ENCODE measurements at regions of chr4 and their contacts with region 1.

Region 1: GRCh38 chr4:10018818-10019461 is 2.4 kb downstream of the SLC2A9 start:
- DNase-seq: peak; percentile 98
- ATAC-seq: peak; percentile 97

Region 2: DNA sequence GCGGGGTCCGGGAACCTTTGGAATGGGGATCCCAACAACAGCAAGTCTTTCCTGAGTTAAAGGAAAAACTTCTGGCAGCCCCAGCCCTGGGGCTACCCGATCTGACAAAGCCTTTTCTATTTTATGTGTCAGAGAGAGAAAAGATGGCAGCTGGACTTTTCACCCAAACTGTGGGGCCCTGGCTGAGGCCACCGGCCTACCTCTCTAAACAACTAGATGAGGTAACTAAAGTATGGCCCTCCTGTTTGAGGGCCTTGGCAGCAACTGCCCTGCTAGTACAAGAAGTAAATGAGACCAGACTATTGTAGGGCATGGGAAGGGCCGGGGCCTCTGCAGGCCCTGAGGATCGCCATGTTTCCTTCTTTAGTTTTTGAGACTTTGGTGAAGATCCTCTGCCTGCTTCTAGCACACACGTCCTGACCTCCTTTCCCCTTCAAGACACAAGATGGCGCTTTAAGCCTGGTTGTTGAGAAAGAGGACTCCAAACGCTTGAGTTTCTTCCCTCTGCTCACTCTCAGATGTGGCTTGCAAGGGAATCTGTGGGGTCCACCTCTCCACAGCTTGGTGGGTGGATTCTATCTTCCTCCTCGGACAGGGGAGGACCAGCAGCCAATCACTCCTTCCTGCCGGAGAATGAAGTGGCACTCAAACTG is 256.0 kb before region 1 on chr4:
- intact Hi-C with region 1: loop called (anchors 10 kb)
- DNase-seq: peak; percentile 70
- ATAC-seq: peak; percentile 56